CD4-positive, alpha-beta memory T cell (primary cell): ENCODE measurements at regions of chr3 and their contacts with region 1.

Region 1: DNA sequence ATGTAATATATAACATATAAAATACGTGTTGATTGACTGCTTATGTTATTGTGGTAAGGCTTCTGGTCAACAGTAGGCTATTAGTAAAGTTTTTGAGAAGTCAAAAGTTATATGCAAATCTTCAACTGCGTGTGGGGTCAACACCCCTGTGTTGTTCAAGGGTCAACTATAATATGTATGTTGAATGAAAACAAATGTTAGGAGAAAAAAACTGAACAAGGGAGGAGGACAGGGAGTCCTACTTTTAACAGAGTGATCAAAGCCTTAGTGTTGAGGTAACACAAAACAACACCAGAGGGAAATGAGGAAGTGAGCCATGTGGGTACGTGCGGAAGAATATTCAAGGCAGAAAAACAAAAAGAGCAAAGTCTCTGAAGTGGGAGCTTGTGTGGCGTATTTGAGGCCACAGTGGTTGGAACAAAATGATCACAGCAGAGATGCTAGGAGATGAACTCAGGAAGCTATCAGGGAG is 62.5 kb downstream of the SFMBT1 start:
- DNase-seq: peak; percentile 85 to 87 (median 86)
- H3K4me3 ChIP-seq: no peak overlapping the region
- H3K4me3 Mint-ChIP-seq: peak overlapping the region; percentile 13 to 87 (median 77)
- H3K27ac ChIP-seq: peak overlapping the region; percentile 19
- H3K27ac Mint-ChIP-seq: peak overlapping the region; percentile 85 to 97 (median 94)
- H3K4me1 ChIP-seq: peaks cover 37% of the 10 kb centered on the region
- H3K4me1 Mint-ChIP-seq: peaks cover 34 to 64% (median 45%) of the 10 kb centered on the region in 4 donors
- H3K27me3 ChIP-seq: no peaks in the 10 kb centered on the region
- H3K27me3 Mint-ChIP-seq: no peaks in the 10 kb centered on the region

Region 2: DNA sequence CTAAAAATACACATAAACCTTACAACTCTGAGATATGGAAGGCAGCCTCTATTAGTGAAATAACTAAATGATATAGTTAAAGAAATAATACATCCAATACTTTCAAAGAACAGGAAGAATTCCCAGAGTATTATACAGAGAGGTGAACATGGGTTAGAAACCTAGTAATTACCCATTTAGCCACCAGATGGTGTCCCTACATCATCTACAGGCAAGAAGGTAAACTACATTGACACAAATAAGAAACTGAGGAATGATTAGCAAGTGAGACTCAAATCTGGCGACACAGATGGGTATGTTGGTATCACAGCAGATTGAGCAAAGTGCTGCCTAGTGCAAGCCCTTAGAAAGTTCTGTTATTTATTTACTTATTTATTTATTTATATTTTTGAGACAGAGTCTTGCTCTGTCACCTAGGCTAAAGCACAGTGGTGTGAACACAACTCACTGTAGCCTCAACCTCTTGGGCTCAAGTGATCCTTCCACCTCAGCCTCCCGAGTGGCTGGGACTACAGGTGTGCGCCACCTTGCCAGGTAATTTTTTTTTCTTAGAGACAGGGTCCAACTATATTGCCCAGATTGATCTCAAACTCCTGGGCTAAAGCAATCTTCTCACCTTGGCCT is 240.8 kb before region 1 on chr3:
- CTCF ChIA-PET with region 1: no interaction called
- POLR2A ChIA-PET with region 1: no interaction called
- intact Hi-C with region 1: loop called (anchors 2 kb)
- DNase-seq: peak in 4 of 5 donors; percentile 16 to 33 (median 27)
- H3K4me3 ChIP-seq: no peak overlapping the region
- H3K4me3 Mint-ChIP-seq: no peak overlapping the region
- H3K27ac ChIP-seq: no peak overlapping the region
- H3K27ac Mint-ChIP-seq: no peak overlapping the region
- H3K4me1 ChIP-seq: no peaks in the 10 kb centered on the region
- H3K4me1 Mint-ChIP-seq: no peaks in the 10 kb centered on the region
- H3K27me3 ChIP-seq: no peaks in the 10 kb centered on the region
- H3K27me3 Mint-ChIP-seq: no peaks in the 10 kb centered on the region

Region 3: GRCh38 chr3:52897130-52898122 is 85.9 kb before region 1 on chr3 and contains the start of gene STIMATE:
- CTCF ChIA-PET with region 1: no interaction called
- POLR2A ChIA-PET with region 1: interaction called, 4 read pairs
- intact Hi-C with region 1: loop called (anchors 1 kb)
- DNase-seq: peak; percentile 86 to 90 (median 88)
- H3K4me3 ChIP-seq: peak within 1 kb of the TSS; percentile 78 to 94
- H3K4me3 Mint-ChIP-seq: peak within 1 kb of the TSS; percentile 88 to 97 (median 95)
- H3K27ac ChIP-seq: peak within 1 kb of the TSS; percentile 65
- H3K27ac Mint-ChIP-seq: peak within 1 kb of the TSS; percentile 86 to 97 (median 95)
- H3K4me1 ChIP-seq: peaks cover 47% of the 10 kb centered on the region
- H3K4me1 Mint-ChIP-seq: peaks cover 39 to 53% (median 47%) of the 10 kb centered on the region in 4 donors
- H3K27me3 ChIP-seq: no peaks in the 10 kb centered on the region
- H3K27me3 Mint-ChIP-seq: no peaks in the 10 kb centered on the region
- total RNA-seq, gene STIMATE: 54.9 to 58.6 TPM

Region 4: DNA sequence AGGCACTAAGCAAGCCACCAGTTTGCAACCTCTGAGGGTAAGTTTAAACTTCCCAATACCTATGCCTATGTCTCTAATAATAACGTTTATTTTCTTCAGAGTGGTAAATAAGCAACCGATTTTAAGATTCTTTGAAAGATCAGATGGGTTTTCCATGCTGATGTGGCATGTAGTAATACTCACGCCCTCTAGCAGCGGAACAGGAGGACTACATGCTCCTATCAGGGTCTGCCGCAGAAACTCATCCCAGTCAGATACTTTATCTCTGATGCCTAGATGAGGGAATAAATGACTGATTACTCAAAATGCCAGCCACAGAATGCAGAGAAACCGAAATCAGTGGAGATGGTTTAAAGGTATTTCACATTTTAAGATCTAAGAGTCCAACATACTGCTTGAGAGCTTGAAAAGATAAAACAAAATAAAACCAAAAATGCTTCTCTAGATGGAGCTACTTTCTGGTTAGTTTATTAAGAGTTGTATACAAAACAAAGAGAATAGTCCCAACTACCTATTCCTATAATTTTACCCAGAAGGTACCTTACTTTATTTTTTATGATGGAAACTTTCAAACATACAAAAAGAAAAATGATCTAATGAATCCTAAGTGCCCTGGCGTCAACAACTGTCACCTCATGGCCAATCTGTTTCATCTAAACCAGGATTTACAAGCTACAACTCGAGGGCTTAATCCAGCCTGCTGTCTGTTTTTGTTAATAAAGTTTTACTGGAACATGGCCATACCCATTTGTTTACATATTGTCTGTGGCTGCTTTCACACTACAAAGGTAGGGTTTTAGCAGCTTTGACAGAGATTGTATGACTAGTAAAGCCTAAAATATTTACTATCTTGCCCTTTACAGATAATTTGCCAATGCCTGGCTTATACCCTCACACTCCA is 48.5 kb before region 1 on chr3:
- CTCF ChIA-PET with region 1: interaction called, 5 read pairs
- POLR2A ChIA-PET with region 1: interaction called, 7 read pairs
- intact Hi-C with region 1: loop called (anchors 1 kb)
- DNase-seq: peak; percentile 49 to 55 (median 49)
- H3K4me3 ChIP-seq: no peak overlapping the region
- H3K4me3 Mint-ChIP-seq: peak overlapping the region in 6 of 8 donors; percentile 3 to 52 (median 26)
- H3K27ac ChIP-seq: no peak overlapping the region
- H3K27ac Mint-ChIP-seq: peak overlapping the region; percentile 49 to 89 (median 84)
- H3K4me1 ChIP-seq: peaks cover 11% of the 10 kb centered on the region
- H3K4me1 Mint-ChIP-seq: peaks cover 10 to 17% (median 14%) of the 10 kb centered on the region in 4 donors
- H3K27me3 ChIP-seq: no peaks in the 10 kb centered on the region
- H3K27me3 Mint-ChIP-seq: no peaks in the 10 kb centered on the region

Region 5: DNA sequence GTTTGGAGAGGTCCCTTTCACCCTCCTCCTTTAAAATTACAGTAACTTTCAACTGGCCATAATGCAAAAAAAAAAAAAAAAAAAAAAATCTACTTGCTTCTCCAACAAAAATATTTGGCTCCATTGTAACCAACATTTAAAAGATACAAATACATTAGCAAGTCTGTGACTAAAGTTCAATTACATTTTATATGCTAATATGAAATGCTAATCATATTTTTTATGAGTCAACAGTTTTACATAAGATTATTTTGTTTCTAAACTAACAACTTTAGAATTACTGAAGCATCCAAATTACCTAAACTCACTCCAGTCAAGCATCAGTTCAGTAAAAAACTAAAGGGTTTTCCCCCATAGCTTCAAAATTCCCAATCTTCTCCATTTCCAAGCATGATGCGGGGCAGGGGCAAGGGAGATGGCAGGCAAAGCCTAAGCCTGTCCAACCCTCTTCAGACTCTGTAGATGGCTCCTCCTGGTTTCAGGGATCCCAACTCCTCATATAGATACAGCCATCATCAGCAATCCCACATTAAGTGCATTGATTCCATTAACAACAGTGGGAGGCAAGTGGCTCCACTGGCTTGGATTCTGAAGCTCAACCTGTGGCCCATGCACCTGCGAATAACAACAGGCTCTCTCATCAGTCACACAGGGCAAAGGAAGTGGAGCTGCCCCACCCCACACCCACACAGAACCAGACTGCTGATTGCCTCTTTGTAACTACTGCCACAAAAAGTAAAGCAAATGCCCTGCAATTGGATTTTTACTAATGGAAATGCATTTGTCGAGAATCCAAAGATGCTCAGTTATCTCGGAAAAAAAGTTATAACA is 47.5 kb after region 1 on chr3:
- CTCF ChIA-PET with region 1: interaction called, 4 read pairs
- POLR2A ChIA-PET with region 1: interaction called, 13 read pairs
- intact Hi-C with region 1: no loop called
- DNase-seq: peak; percentile 35 to 70 (median 53)
- H3K4me3 ChIP-seq: no peak overlapping the region
- H3K4me3 Mint-ChIP-seq: peak overlapping the region; percentile 45 to 78 (median 74)
- H3K27ac ChIP-seq: peak overlapping the region; percentile 16
- H3K27ac Mint-ChIP-seq: peak overlapping the region; percentile 52 to 95 (median 90)
- H3K4me1 ChIP-seq: peaks cover 61% of the 10 kb centered on the region
- H3K4me1 Mint-ChIP-seq: peaks cover 34 to 78% (median 57%) of the 10 kb centered on the region in 4 donors
- H3K27me3 ChIP-seq: no peaks in the 10 kb centered on the region
- H3K27me3 Mint-ChIP-seq: no peaks in the 10 kb centered on the region